Activated naive CD4-positive, alpha-beta T cell treated with anti-CD3 and anti-CD28 coated beads for 36 hours (primary cell): ENCODE measurements at regions of chr2 and their contacts with region 1.

Region 1: GRCh38 chr2:202265467-202266277 is at the start of gene NOP58:
- DNase-seq: peak; percentile 96
- H3K4me3 Mint-ChIP-seq: no peak within 1 kb of the TSS
- H3K27ac Mint-ChIP-seq: no peak within 1 kb of the TSS
- H3K4me1 Mint-ChIP-seq: peaks cover 22% of the 10 kb centered on the region
- H3K27me3 Mint-ChIP-seq: no peaks in the 10 kb centered on the region
- total RNA-seq, gene NOP58: 118 to 123 TPM

Region 2: GRCh38 chr2:200864176-200864976 is 1401.3 kb before region 1 on chr2 and contains the start of gene CLK1:
- CTCF ChIA-PET with region 1: no interaction called
- intact Hi-C with region 1: loop called (anchors 2 kb)
- DNase-seq: peak; percentile 98
- H3K4me3 Mint-ChIP-seq: peak within 1 kb of the TSS; percentile 98
- H3K27ac Mint-ChIP-seq: peak within 1 kb of the TSS; percentile 100
- H3K4me1 Mint-ChIP-seq: peaks cover 32% of the 10 kb centered on the region
- H3K27me3 Mint-ChIP-seq: no peaks in the 10 kb centered on the region
- total RNA-seq, gene CLK1: 174 to 196 TPM

Region 3: DNA sequence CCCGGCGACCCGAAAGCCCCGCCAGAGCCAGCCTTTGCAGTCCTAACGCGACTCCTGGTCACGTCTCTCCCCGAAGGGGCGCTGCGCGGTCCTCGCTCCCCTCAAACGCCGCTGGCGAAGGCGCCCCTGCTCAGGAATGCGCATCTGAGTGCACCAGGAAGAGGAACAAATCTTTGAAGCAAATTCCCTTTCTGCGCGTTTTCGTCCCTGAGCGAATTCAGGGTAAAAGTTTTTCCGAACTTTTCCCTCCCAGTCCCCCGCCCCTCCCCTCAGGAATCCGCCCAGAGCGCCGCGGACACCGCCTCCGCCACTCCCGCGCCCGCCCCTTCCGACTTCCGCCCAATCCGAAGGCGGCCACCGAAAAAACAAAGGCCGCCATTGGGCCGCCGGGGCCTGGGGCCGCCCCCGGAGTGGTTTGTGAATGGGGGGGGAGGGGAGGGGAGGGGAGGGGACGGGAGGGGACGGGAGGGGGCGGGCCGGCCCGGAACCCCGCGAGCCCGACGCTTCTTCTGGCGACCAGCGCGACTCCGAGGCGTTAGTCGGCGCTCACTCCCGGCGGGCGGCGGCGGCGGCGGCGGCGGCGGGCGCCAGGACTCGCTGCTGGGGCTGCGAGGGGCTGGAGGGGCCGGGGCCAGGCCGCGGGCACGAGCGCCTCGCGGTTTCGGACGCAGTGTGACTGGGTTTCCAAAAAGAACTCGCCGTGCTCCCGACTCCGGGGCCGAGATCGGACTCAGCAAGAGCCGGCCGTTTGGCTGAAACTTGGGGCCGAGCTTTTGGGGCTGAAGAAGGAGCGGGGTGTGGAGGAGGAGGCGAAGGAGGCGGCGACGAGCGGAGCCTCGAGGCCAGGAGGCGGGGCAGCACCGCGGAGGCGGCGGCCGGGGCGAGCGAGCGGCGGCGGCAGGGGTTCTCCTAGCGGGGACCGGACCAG is 232.1 kb before region 1 on chr2 and contains the start of gene FZD7:
- CTCF ChIA-PET with region 1: no interaction called
- intact Hi-C with region 1: loop called (anchors 5 kb)
- DNase-seq: peak; percentile 90
- H3K4me3 Mint-ChIP-seq: peak within 1 kb of the TSS; percentile 79
- H3K27ac Mint-ChIP-seq: no peak within 1 kb of the TSS
- H3K4me1 Mint-ChIP-seq: peaks cover 12% of the 10 kb centered on the region
- H3K27me3 Mint-ChIP-seq: peaks cover 18% of the 10 kb centered on the region
- total RNA-seq, gene FZD7: 0.17 to 0.43 TPM

Region 4: DNA sequence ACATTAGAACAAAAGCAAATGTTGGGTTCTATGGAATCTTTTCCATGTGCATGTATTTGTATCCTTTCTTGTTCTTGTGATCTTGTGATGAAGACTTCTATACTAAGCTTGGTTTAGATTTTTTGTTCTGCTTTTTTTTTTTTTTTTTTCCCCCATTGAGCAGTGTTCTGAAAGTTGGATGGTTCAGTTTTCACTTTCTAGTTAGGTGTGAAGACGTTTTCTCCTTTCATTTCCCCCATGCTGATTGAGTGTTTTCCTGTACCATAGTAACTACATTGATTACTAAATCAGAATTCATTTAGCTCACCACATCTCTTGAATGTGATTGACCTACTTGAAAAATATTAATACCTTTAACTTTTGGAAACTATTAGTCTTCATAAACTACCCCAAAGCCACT is 34.0 kb after region 1 on chr2:
- CTCF ChIA-PET with region 1: no interaction called
- intact Hi-C with region 1: loop called (anchors 1 kb)
- DNase-seq: no peak
- H3K4me3 Mint-ChIP-seq: no peak overlapping the region
- H3K27ac Mint-ChIP-seq: peak overlapping the region; percentile 87
- H3K4me1 Mint-ChIP-seq: peaks cover 59% of the 10 kb centered on the region
- H3K27me3 Mint-ChIP-seq: no peaks in the 10 kb centered on the region

Region 5: DNA sequence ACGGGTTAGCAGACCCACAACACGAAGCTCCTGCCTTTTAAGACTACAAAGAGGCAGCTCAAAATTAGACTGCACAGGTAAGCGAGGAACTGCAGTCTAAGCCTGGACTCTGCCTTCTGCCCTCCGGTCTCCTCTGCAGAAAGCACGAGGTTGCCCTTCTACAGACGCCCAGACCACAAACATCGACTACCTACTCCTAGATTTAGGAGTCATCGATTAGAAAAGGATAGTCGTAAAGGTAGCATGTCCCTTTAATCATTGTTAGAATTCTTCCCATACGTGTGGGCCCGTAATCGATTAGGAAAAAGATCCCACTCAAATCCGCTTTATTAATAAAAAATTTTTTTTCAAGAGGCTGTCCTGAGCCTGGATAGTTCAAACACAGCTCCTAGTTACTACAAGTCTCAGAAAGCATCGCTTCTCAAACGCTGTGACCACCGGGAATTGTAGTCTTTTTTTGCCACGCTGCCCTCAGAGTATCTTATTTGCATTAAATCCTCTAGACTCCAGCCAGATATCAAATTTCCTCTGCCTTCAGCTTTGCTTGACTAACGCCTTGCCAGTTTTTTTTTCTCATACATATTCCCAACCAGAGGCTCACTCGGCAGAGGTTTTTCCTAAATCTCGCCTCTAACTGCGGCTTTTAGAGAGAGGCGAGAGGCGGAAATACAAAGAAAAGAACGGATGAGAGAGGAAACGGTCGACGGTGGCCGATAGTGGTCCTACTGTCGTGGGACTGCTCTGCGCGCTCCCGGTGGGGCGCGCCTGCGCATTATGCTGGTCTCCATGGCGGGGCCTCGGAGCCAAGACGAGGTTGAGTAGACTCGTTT is 646.1 kb after region 1 on chr2 and contains the starts of genes CARF and WDR12:
- CTCF ChIA-PET with region 1: no interaction called
- intact Hi-C with region 1: loop called (anchors 5 kb)
- DNase-seq: peak; percentile 95
- H3K4me3 Mint-ChIP-seq: peak within 1 kb of the TSS; percentile 87
- H3K27ac Mint-ChIP-seq: peak within 1 kb of the TSS; percentile 94
- H3K4me1 Mint-ChIP-seq: peaks cover 32% of the 10 kb centered on the region
- H3K27me3 Mint-ChIP-seq: no peaks in the 10 kb centered on the region
- total RNA-seq, gene CARF: 4.0 to 5.4 TPM
- total RNA-seq, gene WDR12: 83.0 to 98.3 TPM

Region 6: GRCh38 chr2:203706403-203706802 is 1440.7 kb after region 1 on chr2 and contains the start of gene CD28:
- CTCF ChIA-PET with region 1: no interaction called
- intact Hi-C with region 1: loop called (anchors 5 kb)
- DNase-seq: peak; percentile 97
- H3K4me3 Mint-ChIP-seq: peak within 1 kb of the TSS; percentile 89
- H3K27ac Mint-ChIP-seq: peak within 1 kb of the TSS; percentile 93
- H3K4me1 Mint-ChIP-seq: peaks cover 37% of the 10 kb centered on the region
- H3K27me3 Mint-ChIP-seq: no peaks in the 10 kb centered on the region
- total RNA-seq, gene CD28: 165 to 167 TPM